ENCODE measurements at regions of chr1 and their contacts with region 1.

Region 1: GRCh38 chr1:101330427-101331130 is 93.8 kb downstream of the S1PR1 start:
- DNase-seq: no peak
- ATAC-seq: no peak
- H3K4me3 ChIP-seq: no peak overlapping the region
- H3K27ac ChIP-seq: no peak overlapping the region
- H3K4me1 ChIP-seq: no peaks in the 10 kb centered on the region
- H3K27me3 ChIP-seq: no peaks in the 10 kb centered on the region
- CTCF ChIP-seq: no peak
- EP300 ChIP-seq: no peak
- POLR2A ChIP-seq: no peak
- RAD21 ChIP-seq: no peak

Region 2: DNA sequence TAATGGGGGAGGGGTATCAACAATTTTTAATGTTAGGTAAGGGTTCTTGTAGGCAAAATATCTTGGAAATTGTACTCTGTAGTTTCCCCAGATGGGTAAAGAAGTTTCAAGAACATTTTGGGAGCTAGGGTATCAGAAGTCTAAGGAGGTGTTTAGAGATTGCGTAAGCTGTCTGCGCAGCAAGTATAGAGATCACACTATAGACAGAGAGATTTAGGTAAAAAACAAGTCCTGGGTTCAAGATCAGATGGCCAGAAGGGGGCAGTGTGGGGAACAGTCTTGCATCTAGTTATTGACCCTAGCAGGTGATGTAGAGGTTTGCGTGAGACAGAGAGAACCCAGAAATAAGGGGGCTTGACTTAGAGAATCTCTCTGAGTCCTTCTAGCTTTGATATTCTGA is 13.0 kb before region 1 on chr1:
- CTCF ChIA-PET with region 1: interaction called, 12 read pairs
- POLR2A ChIA-PET with region 1: interaction called, 3 read pairs
- RAD21 ChIA-PET with region 1: no interaction called
- SMC1A ChIA-PET with region 1: interaction called, 66 read pairs
- in situ Hi-C with region 1: no loop called
- intact Hi-C with region 1: loop called (anchors 2 kb)
- DNase-seq: no peak
- ATAC-seq: no peak
- H3K4me3 ChIP-seq: no peak overlapping the region
- H3K27ac ChIP-seq: no peak overlapping the region
- H3K4me1 ChIP-seq: peaks cover 12% of the 10 kb centered on the region
- H3K27me3 ChIP-seq: no peaks in the 10 kb centered on the region
- CTCF ChIP-seq: 0 out of 6 replicates have a peak, but pooled peaks of 2 of the 3 experiments have one; percentile 7 to 17
- EP300 ChIP-seq: no peak
- POLR2A ChIP-seq: no peak
- RAD21 ChIP-seq: peak; percentile 22; the same call in 1 of the 2 replicates

Measured in GM12878 (cell line).